AG04449 (cell line): ENCODE measurements at regions of chr14 and their contacts with region 1.

Region 1: DNA sequence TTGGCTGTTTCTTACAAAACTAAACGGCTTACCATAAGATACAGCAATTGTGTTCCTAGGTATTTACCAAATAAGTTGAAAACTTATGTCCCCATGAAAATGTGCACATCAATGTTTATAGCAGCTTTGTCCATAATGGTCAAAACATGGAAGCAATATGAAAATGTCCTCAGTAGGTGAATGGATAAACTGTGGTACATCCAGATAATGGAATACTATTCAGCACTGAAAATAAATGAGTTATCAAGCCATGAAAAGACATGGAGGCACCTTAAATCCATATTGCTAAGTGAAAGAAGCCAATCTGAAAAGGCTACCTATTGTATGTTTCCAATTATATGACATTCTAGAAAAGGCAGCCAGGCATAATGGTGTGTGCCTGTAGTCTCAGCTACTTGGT is 40.7 kb downstream of the CFL2 start:
- DNase-seq: no peak
- H3K4me3 ChIP-seq: no peak overlapping the region
- CTCF ChIP-seq: no peak

Region 2: DNA sequence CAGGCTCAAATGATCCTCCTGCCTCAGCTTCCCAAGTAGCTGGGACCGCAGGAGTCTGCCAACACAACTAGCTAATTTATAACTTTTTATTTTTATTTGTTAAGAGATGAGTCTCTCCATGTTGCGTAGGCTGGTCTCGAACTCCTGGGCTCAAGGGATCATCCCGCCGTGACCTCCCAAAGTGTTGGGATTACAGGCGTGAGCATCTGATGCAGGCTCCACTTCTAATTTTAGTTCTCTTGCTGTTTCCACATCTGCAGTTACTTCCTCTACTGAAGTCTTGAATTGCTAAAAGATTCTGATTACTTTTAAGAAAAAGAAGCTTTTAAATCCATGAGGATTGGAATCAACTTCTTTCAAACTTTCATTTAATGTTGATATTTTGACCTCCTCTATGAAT is 30.3 kb before region 1 on chr14:
- CTCF ChIA-PET with region 1: no interaction called
- POLR2A ChIA-PET with region 1: no interaction called
- DNase-seq: no peak
- H3K4me3 ChIP-seq: no peak overlapping the region
- CTCF ChIP-seq: no peak

Region 3: DNA sequence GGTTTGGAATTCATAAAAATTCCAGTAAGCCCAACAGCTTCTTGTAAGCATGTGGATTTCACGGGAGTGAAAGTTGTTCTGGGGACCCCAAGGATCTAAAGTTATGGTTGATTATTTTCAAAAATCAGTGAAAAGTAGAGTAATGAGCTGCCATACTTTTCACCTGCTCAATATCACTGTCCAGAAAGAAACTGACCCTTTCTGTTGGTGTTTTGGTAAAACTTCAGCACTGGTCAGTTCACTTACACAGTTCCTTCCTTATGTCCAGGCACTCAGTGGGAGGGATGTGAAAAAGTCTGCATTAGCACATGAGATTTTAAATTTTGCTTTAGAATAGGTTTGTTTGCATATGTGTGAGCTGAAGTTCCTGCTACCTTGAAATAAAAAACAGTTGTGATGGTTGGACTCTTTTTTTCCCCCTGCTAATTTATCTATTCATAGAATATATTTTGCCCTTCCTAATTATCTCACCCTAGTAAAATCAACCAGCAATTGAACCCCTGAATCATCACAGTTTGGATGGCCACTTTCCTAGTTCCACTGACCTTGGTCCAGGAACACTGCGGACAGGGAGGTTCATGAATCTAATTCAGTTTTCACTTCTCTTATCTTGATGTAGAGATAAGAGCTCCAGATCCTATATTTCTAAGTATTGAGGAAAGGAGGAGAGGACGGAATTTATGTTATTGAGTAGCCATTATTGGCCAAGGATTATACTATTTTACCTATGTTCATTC is 14.9 kb after region 1 on chr14:
- CTCF ChIA-PET with region 1: interaction called, 26 read pairs
- POLR2A ChIA-PET with region 1: no interaction called
- DNase-seq: no peak
- H3K4me3 ChIP-seq: no peak overlapping the region
- CTCF ChIP-seq: no peak

Region 4: GRCh38 chr14:35020713-35021112 is 347.0 kb after region 1 on chr14:
- CTCF ChIA-PET with region 1: interaction called, 11 read pairs
- POLR2A ChIA-PET with region 1: no interaction called
- DNase-seq: no peak
- H3K4me3 ChIP-seq: no peak overlapping the region
- CTCF ChIP-seq: no peak